Caco-2 (cell line): ENCODE measurements at regions of chr7 and their contacts with region 1.

Region 1: DNA sequence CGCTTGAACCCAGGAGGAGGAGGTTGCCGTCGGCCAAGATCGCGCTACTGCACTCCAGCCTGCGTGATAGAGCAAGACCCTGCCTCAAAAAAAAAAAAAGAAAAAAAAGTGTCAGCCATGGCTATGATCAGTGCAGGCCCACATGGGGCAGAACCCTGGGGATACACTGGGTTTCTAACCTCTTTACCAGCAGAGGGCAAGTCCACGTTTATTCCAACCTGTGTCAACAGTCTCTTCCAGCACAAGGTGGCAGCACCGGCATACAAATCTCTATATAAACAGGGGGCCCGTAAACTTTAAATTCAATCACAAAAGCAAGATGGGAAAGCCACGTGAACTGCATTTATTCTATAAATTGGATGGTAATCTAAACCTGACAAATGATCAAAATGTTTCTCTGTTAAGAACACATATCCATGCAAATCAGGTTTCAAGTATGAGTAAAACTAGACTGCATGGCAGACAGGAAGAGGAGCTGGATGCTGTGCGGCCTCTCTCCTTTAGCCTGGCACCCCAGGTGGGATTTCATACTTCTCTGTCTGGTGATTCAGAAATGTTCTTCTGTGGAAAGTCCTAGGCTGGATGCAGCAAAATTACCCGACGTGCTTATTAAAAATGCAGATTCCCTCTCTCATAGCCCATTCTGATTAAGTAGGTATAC is 60.0 kb upstream of the STEAP1B start:
- DNase-seq: peak; percentile 79 to 82
- H3K4me3 ChIP-seq: no peak overlapping the region
- H3K4me3 Mint-ChIP-seq: no peak overlapping the region
- H3K27ac Mint-ChIP-seq: peak overlapping the region; percentile 29
- H3K4me1 ChIP-seq: peaks cover 40% of the 10 kb centered on the region
- H3K4me1 Mint-ChIP-seq: peaks cover 17% of the 10 kb centered on the region
- H3K27me3 ChIP-seq: no peaks in the 10 kb centered on the region
- H3K27me3 Mint-ChIP-seq: no peaks in the 10 kb centered on the region
- CTCF ChIP-seq: peak; percentile 93 to 95

Region 2: GRCh38 chr7:22319424-22320403 is 240.2 kb before region 1 on chr7:
- CTCF ChIA-PET with region 1: no interaction called
- POLR2A ChIA-PET with region 1: no interaction called
- intact Hi-C with region 1: no loop called
- DNase-seq: no peak
- H3K4me3 ChIP-seq: no peak overlapping the region
- H3K4me3 Mint-ChIP-seq: no peak overlapping the region
- H3K27ac Mint-ChIP-seq: no peak overlapping the region
- H3K4me1 ChIP-seq: peaks cover 11% of the 10 kb centered on the region
- H3K4me1 Mint-ChIP-seq: peaks cover 12% of the 10 kb centered on the region
- H3K27me3 ChIP-seq: no peaks in the 10 kb centered on the region
- H3K27me3 Mint-ChIP-seq: no peaks in the 10 kb centered on the region
- CTCF ChIP-seq: no peak

Region 3: DNA sequence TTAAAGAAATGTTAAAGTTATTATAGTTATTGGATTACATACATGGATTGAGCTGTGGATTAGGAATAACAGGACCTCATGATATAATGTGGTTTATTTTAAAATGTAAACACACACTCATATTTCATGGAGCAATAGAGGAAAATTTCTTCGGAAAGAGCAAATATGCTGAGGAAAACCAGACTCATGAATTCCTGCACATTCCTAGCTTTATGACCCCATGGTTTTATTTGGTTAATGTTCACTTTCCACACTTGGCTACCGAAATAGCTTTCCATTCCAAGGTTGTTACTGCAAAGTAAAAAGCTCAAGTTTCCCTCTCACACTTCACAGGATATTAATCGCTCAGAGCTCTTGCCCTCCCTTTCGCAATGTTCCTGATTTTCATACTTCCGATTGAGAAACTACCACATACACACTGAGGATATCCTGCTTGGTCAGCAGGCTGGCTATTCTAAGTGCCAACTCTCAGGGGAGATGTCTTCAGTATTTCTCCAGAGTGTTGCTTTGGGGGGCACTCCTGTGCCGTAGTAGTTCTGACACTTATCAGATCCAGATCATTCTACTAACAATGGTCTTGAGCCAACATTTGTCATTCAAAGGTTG is 17.5 kb after region 1 on chr7:
- CTCF ChIA-PET with region 1: interaction called, 8 read pairs
- POLR2A ChIA-PET with region 1: no interaction called
- intact Hi-C with region 1: loop called (anchors 1 kb)
- DNase-seq: peak; percentile 55 to 59
- H3K4me3 ChIP-seq: no peak overlapping the region
- H3K4me3 Mint-ChIP-seq: peak overlapping the region; percentile 30
- H3K27ac Mint-ChIP-seq: peak overlapping the region; percentile 75
- H3K4me1 ChIP-seq: peaks cover 63% of the 10 kb centered on the region
- H3K4me1 Mint-ChIP-seq: peaks cover 40% of the 10 kb centered on the region
- H3K27me3 ChIP-seq: no peaks in the 10 kb centered on the region
- H3K27me3 Mint-ChIP-seq: no peaks in the 10 kb centered on the region
- CTCF ChIP-seq: no peak

Region 4: DNA sequence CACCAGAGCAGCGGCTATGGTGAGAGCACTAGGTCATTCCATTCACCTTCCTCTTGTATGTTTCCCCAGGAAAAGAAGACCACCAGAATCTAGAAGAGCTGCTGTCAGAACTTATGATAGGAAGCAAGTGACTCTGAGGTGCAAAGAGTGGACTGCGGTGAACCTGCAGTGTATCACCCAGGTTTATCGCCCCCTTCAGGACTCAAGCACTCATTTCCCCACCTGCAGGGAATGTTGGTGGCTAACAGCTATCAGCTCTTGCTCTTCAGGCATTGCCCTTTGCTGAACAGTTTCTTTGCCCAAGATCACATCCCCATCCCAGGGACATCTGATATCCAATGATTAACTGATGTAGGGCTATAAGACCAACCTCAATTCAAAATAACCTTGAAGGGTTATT is 100.8 kb after region 1 on chr7:
- CTCF ChIA-PET with region 1: interaction called, 5 read pairs
- POLR2A ChIA-PET with region 1: no interaction called
- intact Hi-C with region 1: loop called (anchors 2 kb)
- DNase-seq: peak in 1 of 2 experiments; percentile 11
- H3K4me3 ChIP-seq: no peak overlapping the region
- H3K4me3 Mint-ChIP-seq: no peak overlapping the region
- H3K27ac Mint-ChIP-seq: no peak overlapping the region
- H3K4me1 ChIP-seq: no peaks in the 10 kb centered on the region
- H3K4me1 Mint-ChIP-seq: no peaks in the 10 kb centered on the region
- H3K27me3 ChIP-seq: no peaks in the 10 kb centered on the region
- H3K27me3 Mint-ChIP-seq: no peaks in the 10 kb centered on the region
- CTCF ChIP-seq: no peak

Region 5: GRCh38 chr7:22732556-22733126 is 172.7 kb after region 1 on chr7:
- CTCF ChIA-PET with region 1: interaction called, 95 read pairs
- POLR2A ChIA-PET with region 1: no interaction called
- intact Hi-C with region 1: loop called (anchors 1 kb)
- DNase-seq: peak in 1 of 2 experiments; percentile 51
- H3K4me3 ChIP-seq: no peak overlapping the region
- H3K4me3 Mint-ChIP-seq: no peak overlapping the region
- H3K27ac Mint-ChIP-seq: no peak overlapping the region
- H3K4me1 ChIP-seq: peaks cover 3% of the 10 kb centered on the region; the same call in 1 of the 2 replicates
- H3K4me1 Mint-ChIP-seq: peaks cover 5% of the 10 kb centered on the region
- H3K27me3 ChIP-seq: no peaks in the 10 kb centered on the region
- H3K27me3 Mint-ChIP-seq: no peaks in the 10 kb centered on the region
- CTCF ChIP-seq: peak; percentile 36 to 71

Region 6: DNA sequence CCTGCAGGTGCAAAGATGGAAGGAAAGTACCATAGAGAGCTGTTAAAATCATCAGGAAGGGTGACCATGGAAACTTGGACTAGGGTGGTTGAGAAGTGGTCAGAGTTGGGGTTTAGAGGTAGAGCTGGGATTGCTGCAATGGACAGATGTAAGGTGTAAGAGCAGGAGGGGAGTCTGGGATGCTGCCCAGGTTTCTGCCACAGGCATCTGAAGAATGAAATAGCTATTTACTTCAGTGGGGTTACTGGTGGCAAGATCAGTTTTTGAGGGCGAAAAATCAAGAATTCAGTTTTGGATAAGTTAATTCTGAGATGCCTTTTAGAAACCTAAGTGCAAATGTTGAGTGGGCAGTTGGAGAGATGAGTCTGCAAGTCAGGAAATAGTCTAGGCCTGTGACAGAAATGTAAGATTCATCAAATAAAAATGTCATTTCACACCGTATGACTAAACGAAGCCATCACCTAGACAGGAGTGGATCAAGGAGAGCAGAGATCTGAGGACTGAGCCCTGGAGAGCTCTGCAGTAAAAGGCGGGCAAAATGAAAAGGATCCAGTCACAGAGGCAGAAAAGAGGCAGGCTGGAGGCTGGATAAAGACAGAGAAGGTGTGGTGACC is 285.4 kb after region 1 on chr7:
- CTCF ChIA-PET with region 1: no interaction called
- POLR2A ChIA-PET with region 1: interaction called, 11 read pairs
- intact Hi-C with region 1: no loop called
- DNase-seq: no peak
- H3K4me3 ChIP-seq: no peak overlapping the region
- H3K4me3 Mint-ChIP-seq: no peak overlapping the region
- H3K27ac Mint-ChIP-seq: no peak overlapping the region
- H3K4me1 ChIP-seq: 0 out of 2 replicates have a peak, but pooled peaks cover 5% of the 10 kb centered on the region
- H3K4me1 Mint-ChIP-seq: peaks cover 7% of the 10 kb centered on the region
- H3K27me3 ChIP-seq: no peaks in the 10 kb centered on the region
- H3K27me3 Mint-ChIP-seq: no peaks in the 10 kb centered on the region
- CTCF ChIP-seq: no peak

Region 7: DNA sequence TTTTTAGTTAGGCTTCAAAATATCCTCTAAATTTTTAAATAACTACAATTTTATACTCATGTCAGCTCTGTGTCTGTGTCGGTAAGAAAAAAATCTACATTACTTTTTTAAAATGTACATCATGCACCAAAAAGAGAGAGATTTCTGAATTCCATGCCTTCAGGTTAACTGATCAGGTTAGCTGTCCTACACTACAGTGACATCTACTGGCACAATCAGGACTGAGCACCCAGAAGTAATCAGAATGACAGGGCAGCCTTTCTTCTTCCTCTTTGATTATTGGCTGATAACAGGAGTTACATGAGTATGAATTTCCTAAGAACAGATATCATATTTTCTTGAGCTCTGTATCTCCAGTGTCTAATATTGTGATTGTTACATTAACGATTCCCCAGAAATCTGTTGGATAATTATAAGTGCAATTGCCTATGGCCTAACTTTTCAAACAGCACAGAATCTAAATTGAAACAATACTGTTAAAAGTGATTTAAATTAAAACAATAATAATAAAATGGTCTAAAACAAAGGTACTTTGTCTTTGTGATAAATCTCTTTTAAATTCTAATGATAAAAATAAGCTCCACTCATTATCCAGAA is 495.7 kb after region 1 on chr7:
- CTCF ChIA-PET with region 1: interaction called, 9 read pairs
- POLR2A ChIA-PET with region 1: no interaction called
- intact Hi-C with region 1: loop called (anchors 1 kb)
- DNase-seq: peak; percentile 63 to 74
- H3K4me3 ChIP-seq: no peak overlapping the region
- H3K4me3 Mint-ChIP-seq: no peak overlapping the region
- H3K27ac Mint-ChIP-seq: no peak overlapping the region
- H3K4me1 ChIP-seq: peaks cover 10% of the 10 kb centered on the region; the same call in 1 of the 2 replicates
- H3K4me1 Mint-ChIP-seq: peaks cover 24% of the 10 kb centered on the region
- H3K27me3 ChIP-seq: no peaks in the 10 kb centered on the region
- H3K27me3 Mint-ChIP-seq: no peaks in the 10 kb centered on the region
- CTCF ChIP-seq: peak; percentile 86 to 91